B cell (primary cell): ENCODE measurements at regions of chr11 and their contacts with region 1.

Region 1: GRCh38 chr11:9663699-9664275 is at the start of gene SWAP70:
- DNase-seq: peak; percentile 93
- ATAC-seq: peak; percentile 85
- H3K4me3 ChIP-seq: peak within 1 kb of the TSS; percentile 83 to 100 (median 94)
- H3K4me3 Mint-ChIP-seq: peak within 1 kb of the TSS; percentile 94
- H3K27ac ChIP-seq: peak within 1 kb of the TSS; percentile 84 to 95
- H3K27ac Mint-ChIP-seq: peak within 1 kb of the TSS; percentile 88
- H3K4me1 ChIP-seq: peaks cover 47 to 50% of the 10 kb centered on the region in 2 donors
- H3K4me1 Mint-ChIP-seq: peaks cover 63% of the 10 kb centered on the region
- H3K27me3 ChIP-seq: no peaks in the 10 kb centered on the region
- H3K27me3 Mint-ChIP-seq: no peaks in the 10 kb centered on the region
- CTCF ChIP-seq: no peak
- total RNA-seq, gene SWAP70: 200 and 203 TPM in 2 replicates

Region 2: DNA sequence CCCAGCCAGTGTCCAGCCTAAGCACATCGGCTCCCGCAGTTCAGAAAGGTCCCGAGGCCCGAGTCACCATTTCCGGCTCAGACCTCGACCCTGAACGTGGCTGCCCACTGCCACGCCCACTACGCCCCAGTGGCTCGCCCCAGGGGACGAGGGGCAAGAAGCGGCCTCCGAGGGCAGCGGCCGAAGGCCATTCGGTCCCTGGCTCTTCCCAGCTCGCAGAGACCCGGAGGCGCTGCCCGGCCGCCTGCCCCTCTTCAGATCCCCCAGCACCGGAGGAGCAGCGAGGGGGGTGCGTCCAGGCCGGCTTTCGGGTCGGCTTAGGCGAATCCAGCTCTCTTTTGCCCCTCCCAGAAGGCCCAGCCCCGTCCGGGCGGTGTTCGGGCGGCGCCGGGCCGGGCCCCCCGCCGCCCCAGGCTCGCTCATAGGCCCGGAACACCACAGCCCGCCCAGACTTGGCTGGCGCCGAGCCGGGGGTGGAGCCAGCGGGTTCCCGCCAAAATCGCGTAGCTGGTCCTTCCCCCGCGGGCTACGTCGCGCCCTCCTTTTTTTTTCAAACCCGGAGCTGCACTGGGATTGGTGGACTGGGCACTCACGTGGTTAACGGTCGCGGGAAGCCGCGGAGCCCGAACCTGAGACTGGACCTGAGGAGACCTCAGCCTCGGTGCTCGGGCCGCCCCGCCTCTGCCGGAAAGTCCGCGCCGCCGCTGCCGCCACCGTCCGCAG is 90.6 kb before region 1 on chr11 and contains the start of gene WEE1:
- CTCF ChIA-PET with region 1: no interaction called
- POLR2A ChIA-PET with region 1: interaction called, 11 read pairs
- intact Hi-C with region 1: loop called (anchors 1 kb)
- DNase-seq: peak; percentile 97
- ATAC-seq: peak; percentile 87
- H3K4me3 ChIP-seq: peak within 1 kb of the TSS; percentile 52 to 96 (median 90)
- H3K4me3 Mint-ChIP-seq: peak within 1 kb of the TSS; percentile 97
- H3K27ac ChIP-seq: peak within 1 kb of the TSS; percentile 83 to 89
- H3K27ac Mint-ChIP-seq: peak within 1 kb of the TSS; percentile 94
- H3K4me1 ChIP-seq: peaks cover 51 to 55% of the 10 kb centered on the region in 2 donors
- H3K4me1 Mint-ChIP-seq: peaks cover 64% of the 10 kb centered on the region
- H3K27me3 ChIP-seq: no peaks in the 10 kb centered on the region
- H3K27me3 Mint-ChIP-seq: no peaks in the 10 kb centered on the region
- CTCF ChIP-seq: no peak
- total RNA-seq, gene WEE1: 31.2 and 31.3 TPM in 2 replicates

Region 3: DNA sequence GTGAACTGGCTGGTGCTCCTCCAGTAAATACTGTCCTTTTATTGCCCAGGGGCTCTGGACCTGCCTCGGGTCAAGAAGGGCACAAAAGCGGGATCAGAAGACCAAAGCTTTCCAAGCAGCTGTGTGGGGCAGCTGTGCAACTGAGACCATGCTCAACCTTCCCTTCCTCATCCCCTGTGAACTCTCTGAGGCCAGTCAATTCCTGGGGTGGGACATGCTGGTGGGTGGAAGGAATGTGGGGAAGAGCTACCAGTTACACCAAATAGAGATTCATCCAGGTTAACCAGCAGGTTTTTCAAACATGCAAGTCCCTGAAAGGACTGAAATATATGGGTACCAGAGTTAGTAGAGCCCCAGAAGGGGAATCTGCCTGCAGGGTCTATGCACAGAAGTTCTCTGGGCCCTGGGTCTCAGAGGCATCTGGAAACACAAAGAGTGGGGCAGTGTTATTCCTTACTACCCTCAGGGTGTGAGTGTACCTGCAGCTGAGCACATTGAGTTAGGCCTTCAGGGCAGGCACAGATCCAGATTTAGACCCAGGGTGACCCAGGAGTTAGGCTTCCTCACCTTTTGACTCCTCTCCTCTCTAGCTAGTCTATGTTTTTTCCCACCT is 43.9 kb before region 1 on chr11:
- CTCF ChIA-PET with region 1: interaction called, 5 read pairs
- POLR2A ChIA-PET with region 1: interaction called, 12 read pairs
- intact Hi-C with region 1: loop called (anchors 1 kb)
- DNase-seq: peak; percentile 33
- ATAC-seq: no peak
- H3K4me3 ChIP-seq: peak overlapping the region in 2 of 5 experiments; percentile 11 to 17
- H3K4me3 Mint-ChIP-seq: peak overlapping the region; percentile 69
- H3K27ac ChIP-seq: peak overlapping the region; percentile 51 to 61
- H3K27ac Mint-ChIP-seq: peak overlapping the region; percentile 82
- H3K4me1 ChIP-seq: peaks cover 59 to 63% of the 10 kb centered on the region in 2 donors
- H3K4me1 Mint-ChIP-seq: peaks cover 67% of the 10 kb centered on the region
- H3K27me3 ChIP-seq: no peaks in the 10 kb centered on the region
- H3K27me3 Mint-ChIP-seq: no peaks in the 10 kb centered on the region
- CTCF ChIP-seq: no peak

Region 4: GRCh38 chr11:9643751-9644150 is 20.0 kb before region 1 on chr11:
- CTCF ChIA-PET with region 1: interaction called, 3 read pairs
- POLR2A ChIA-PET with region 1: interaction called, 4 read pairs
- intact Hi-C with region 1: loop called (anchors 2 kb)
- DNase-seq: no peak
- ATAC-seq: no peak
- H3K4me3 ChIP-seq: no peak overlapping the region
- H3K4me3 Mint-ChIP-seq: no peak overlapping the region
- H3K27ac ChIP-seq: no peak overlapping the region
- H3K27ac Mint-ChIP-seq: peak overlapping the region; percentile 16
- H3K4me1 ChIP-seq: peaks cover 38 to 47% of the 10 kb centered on the region in 2 donors
- H3K4me1 Mint-ChIP-seq: peaks cover 60% of the 10 kb centered on the region
- H3K27me3 ChIP-seq: no peaks in the 10 kb centered on the region
- H3K27me3 Mint-ChIP-seq: no peaks in the 10 kb centered on the region
- CTCF ChIP-seq: no peak

Region 5: GRCh38 chr11:9688716-9689511 is 25.1 kb after region 1 on chr11:
- CTCF ChIA-PET with region 1: interaction called, 6 read pairs
- POLR2A ChIA-PET with region 1: interaction called, 5 read pairs
- intact Hi-C with region 1: loop called (anchors 2 kb)
- DNase-seq: peak; percentile 78
- ATAC-seq: peak; percentile 74
- H3K4me3 ChIP-seq: peak overlapping the region in 4 of 5 experiments; percentile 7 to 50 (median 26)
- H3K4me3 Mint-ChIP-seq: no peak overlapping the region
- H3K27ac ChIP-seq: peak overlapping the region; percentile 91 to 96
- H3K27ac Mint-ChIP-seq: no peak overlapping the region
- H3K4me1 ChIP-seq: peaks cover 85 to 88% of the 10 kb centered on the region in 2 donors
- H3K4me1 Mint-ChIP-seq: peaks cover 60% of the 10 kb centered on the region
- H3K27me3 ChIP-seq: no peaks in the 10 kb centered on the region
- H3K27me3 Mint-ChIP-seq: no peaks in the 10 kb centered on the region
- CTCF ChIP-seq: no peak

Region 6: DNA sequence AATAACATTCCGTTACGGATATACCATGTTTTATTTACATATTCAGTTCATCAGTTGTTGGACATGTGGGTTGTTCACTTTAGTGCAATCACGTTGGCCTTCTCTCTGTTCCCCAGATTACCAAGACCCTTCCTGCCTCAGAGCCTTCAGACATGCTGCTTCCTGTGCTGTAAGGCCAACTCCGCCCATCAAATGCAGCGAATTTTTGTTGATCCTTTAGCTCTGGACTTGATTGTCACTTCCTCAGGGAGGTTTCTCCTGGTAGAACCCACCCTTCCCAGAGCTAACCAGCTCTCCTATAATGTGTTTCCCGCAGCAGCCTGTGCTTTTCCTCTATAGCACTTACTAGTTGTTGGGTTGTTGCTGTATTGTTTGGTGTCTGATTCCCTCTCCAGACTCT is 39.5 kb after region 1 on chr11:
- CTCF ChIA-PET with region 1: no interaction called
- POLR2A ChIA-PET with region 1: no interaction called
- intact Hi-C with region 1: loop called (anchors 5 kb)
- DNase-seq: peak; percentile 47
- ATAC-seq: no peak
- H3K4me3 ChIP-seq: no peak overlapping the region
- H3K4me3 Mint-ChIP-seq: peak overlapping the region; percentile 52
- H3K27ac ChIP-seq: peak overlapping the region; percentile 52 to 82
- H3K27ac Mint-ChIP-seq: peak overlapping the region; percentile 85
- H3K4me1 ChIP-seq: peaks cover 66 to 75% of the 10 kb centered on the region in 2 donors
- H3K4me1 Mint-ChIP-seq: peaks cover 66% of the 10 kb centered on the region
- H3K27me3 ChIP-seq: no peaks in the 10 kb centered on the region
- H3K27me3 Mint-ChIP-seq: no peaks in the 10 kb centered on the region
- CTCF ChIP-seq: no peak

Region 7: DNA sequence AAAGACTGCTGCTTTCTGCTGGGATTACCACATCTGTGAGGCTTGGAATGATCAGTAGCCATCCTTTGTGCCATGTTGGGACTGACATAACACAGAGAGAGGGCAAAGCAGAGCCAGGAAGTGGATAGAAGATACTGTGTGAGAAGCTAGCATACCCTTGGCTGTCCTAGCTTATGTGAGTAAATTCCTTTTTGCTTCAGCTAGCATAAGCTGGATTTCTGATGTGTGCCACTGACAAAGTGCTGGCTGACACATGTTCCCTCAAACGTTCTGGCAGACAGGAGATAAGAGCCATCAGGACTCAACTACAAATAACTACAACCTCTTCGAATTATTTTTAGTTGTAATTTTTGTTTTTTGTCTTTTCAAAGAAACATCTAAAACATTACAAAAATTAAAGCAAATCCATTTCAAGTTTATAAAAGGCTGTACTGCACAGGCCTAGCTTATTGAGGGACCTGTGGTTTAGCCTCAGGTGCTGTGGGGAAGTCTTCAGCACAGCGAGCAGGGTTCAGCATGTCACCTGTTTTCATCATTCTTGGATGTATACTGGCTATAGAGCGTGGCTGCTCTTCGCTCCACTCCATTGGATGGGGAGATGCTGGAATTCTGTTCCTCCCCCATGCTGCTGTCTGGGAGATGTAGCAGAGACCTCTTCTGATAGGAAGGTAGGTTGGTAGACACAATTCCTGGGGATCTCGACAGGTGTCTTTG is 121.0 kb after region 1 on chr11:
- CTCF ChIA-PET with region 1: no interaction called
- POLR2A ChIA-PET with region 1: no interaction called
- intact Hi-C with region 1: no loop called
- DNase-seq: no peak
- ATAC-seq: no peak
- H3K4me3 ChIP-seq: no peak overlapping the region
- H3K4me3 Mint-ChIP-seq: no peak overlapping the region
- H3K27ac ChIP-seq: no peak overlapping the region
- H3K27ac Mint-ChIP-seq: peak overlapping the region; percentile 59
- H3K4me1 ChIP-seq: peaks cover 14 to 21% of the 10 kb centered on the region in 2 donors
- H3K4me1 Mint-ChIP-seq: peaks cover 20% of the 10 kb centered on the region
- H3K27me3 ChIP-seq: no peaks in the 10 kb centered on the region
- H3K27me3 Mint-ChIP-seq: no peaks in the 10 kb centered on the region
- CTCF ChIP-seq: no peak